ENCODE measurements at regions of chr11 and their contacts with region 1.

Region 1: DNA sequence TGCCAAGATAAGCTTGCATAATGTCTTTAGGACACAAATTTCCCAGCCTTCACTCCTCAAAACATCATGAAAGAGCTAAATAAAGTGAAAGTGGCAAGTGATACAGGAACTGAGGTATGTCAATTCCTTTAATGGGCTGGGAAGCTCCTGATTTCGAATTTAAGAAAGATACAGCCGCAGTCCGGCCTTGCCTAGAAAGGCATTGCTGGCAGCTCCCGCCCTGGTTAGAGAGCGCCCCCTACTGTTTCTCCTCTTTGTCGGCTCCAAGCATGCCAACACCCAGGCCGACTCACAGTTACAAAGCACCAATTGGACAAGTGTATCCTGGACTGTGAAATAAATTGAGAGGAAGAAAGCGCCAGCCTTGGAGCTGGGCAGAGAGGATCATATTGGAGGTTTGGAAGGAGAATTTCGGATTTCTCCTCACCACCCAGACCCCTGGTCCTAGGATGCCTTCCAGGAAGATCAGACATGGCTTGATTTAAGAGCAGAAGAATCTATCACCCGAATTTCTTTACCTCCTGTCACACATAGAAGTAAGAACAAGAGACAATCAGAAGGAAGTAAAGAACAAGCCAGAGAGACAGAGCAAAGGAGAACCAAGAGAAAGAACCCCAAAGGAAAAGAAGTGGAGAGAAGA is 84.0 kb downstream of the FAM76B start:
- DNase-seq: peak; percentile 82

Region 2: DNA sequence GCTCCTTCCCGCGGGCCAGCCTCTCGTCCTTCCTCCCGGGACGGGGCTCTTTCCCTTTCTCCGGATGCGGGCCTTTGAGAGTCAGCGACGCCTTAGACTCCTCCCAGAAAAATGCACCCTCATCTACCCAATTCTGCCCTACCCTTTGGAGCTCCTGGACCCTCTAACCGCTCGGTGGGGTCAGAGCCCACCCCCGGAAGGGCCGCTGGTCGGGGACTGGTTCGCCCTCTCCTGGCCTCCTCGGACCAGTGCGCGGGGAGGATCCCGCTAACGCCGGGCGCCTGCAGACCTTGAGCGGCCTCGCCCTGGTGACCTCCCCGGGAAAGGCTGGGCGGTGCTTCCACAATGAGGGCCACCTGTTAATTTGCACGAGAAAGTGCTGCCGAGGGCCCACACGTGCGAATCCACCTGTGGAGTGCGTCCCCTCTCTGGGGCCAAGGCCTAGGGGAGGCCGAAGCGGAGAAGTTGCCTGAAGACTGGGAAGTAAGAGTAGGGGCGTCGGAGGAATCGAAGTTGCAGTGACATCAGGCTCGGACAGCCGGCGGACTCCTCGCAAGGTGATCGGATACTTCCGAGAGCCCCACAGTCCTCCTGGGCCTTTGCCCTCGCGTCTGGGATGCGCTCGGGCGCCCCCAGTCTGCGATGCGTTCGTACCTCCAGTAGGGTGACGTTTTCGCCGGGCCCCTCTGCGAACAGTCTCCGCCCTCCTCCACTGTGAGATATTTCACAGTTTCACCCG is 554.5 kb before region 1 on chr11:
- CTCF ChIA-PET with region 1: interaction called, 29 read pairs
- POLR2A ChIA-PET with region 1: no interaction called
- DNase-seq: peak; percentile 85

Region 3: GRCh38 chr11:95692526-95693260 is 12.9 kb before region 1 on chr11:
- CTCF ChIA-PET with region 1: interaction called, 18 read pairs
- POLR2A ChIA-PET with region 1: no interaction called
- DNase-seq: no peak

Measured in HEK293T (cell line).